Spleen (tissue), 13 donors: ENCODE measurements at regions of chr5 and their contacts with region 1.

Region 1: GRCh38 chr5:96687812-96688453 is 25.8 kb downstream of the CAST start:
- DNase-seq: no peak
- H3K4me3 ChIP-seq: no peak overlapping the region
- H3K27ac ChIP-seq: peak overlapping the region in 1 of 8 donors; percentile 31
- H3K4me1 ChIP-seq: peaks cover 0 to 45% (median 15%) of the 10 kb centered on the region in 6 donors
- H3K27me3 ChIP-seq: no peaks in the 10 kb centered on the region
- CTCF ChIP-seq: peak in 8 of 11 experiments; percentile 17 to 62 (median 50)
- POLR2A ChIP-seq: no peak

Region 2: GRCh38 chr5:96562614-96563013 is 125.3 kb before region 1 on chr5:
- intact Hi-C with region 1: no loop called
- DNase-seq: no peak
- H3K4me3 ChIP-seq: no peak overlapping the region
- H3K27ac ChIP-seq: no peak overlapping the region
- H3K4me1 ChIP-seq: peaks cover 0 to 10% (median 5%) of the 10 kb centered on the region in 6 donors
- H3K27me3 ChIP-seq: no peaks in the 10 kb centered on the region
- CTCF ChIP-seq: no peak
- POLR2A ChIP-seq: no peak

Region 3: GRCh38 chr5:96614110-96614691 is 73.7 kb before region 1 on chr5:
- intact Hi-C with region 1: loop called (anchors 10 kb)
- DNase-seq: no peak
- H3K4me3 ChIP-seq: no peak overlapping the region
- H3K27ac ChIP-seq: peak overlapping the region in 6 of 8 donors; percentile 15 to 65 (median 44)
- H3K4me1 ChIP-seq: peaks cover 0 to 19% (median 14%) of the 10 kb centered on the region in 6 donors
- H3K27me3 ChIP-seq: no peaks in the 10 kb centered on the region
- CTCF ChIP-seq: peak in 10 of 11 experiments; percentile 30 to 69 (median 43)
- POLR2A ChIP-seq: no peak